ENCODE measurements at regions of chr6 and their contacts with region 1.

Region 1: GRCh38 chr6:96743496-96743895 is 93.8 kb downstream of the GPR63 start:
- H3K4me3 ChIP-seq: no peak overlapping the region
- H3K27ac ChIP-seq: no peak overlapping the region
- H3K4me1 ChIP-seq: no peaks in the 10 kb centered on the region
- CTCF ChIP-seq: no peak

Region 2: DNA sequence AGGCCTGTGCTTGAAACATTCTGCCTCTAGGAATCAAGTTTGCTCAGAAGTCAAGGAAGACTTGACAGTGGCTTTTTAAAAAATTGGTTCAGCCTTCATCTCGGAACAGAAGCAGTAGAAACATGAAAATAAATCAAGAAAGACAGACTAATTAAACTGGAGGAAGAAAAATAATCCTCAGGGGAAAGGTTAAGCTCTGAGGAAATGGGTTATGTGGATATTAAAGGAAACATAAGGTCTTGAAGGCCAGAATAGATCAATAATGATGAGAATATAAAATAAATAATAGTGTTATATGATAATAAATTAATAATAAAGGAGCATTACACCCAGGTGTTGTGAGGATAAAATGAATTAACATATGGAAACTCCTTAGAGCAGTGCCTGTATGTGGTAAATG is 27.9 kb before region 1 on chr6:
- CTCF ChIA-PET with region 1: interaction called, 10 read pairs
- POLR2A ChIA-PET with region 1: no interaction called
- H3K4me3 ChIP-seq: no peak overlapping the region
- H3K27ac ChIP-seq: no peak overlapping the region
- H3K4me1 ChIP-seq: no peaks in the 10 kb centered on the region
- CTCF ChIP-seq: no peak

Region 3: GRCh38 chr6:96795481-96795880 is 52.0 kb after region 1 on chr6:
- CTCF ChIA-PET with region 1: no interaction called
- POLR2A ChIA-PET with region 1: no interaction called
- H3K4me3 ChIP-seq: no peak overlapping the region
- H3K27ac ChIP-seq: no peak overlapping the region
- H3K4me1 ChIP-seq: peaks cover 10% of the 10 kb centered on the region
- CTCF ChIP-seq: no peak